Posterior vena cava (tissue), 2 donors: ENCODE measurements at regions of chr12 and their contacts with region 1.

Region 1: DNA sequence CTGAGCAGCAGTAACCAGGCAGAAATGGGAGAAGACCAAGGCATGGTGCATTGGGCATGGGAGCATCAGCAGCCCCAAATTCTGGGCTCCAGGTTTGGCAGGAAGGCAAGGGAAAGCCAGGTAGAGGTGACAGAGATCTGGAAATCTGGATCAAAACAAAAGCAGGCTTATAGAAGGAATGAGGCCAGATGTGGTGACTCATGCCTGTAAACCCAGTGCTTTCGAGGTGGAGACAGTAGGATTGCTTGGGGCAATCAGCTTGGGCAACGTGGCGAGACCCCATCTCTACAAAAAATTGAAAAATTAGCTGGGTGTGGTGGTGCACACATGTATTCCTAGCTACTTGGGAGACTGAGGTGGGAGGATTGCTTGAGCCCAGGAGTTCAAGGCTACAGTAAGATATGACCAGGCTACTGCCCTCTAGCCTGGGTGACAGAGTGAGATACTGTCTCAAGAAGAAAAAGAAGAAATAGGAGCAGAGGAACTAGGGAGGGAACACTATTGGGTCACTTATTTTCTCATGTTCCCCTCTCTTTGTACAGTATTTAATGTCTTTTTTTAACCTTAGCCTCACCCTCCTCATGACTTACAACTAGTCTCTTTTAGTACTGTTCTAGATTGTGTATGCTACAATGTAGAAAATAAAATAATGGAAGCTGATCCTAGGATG is 25.1 kb downstream of the SLC4A8 start:
- DNase-seq: no peak

Region 2: DNA sequence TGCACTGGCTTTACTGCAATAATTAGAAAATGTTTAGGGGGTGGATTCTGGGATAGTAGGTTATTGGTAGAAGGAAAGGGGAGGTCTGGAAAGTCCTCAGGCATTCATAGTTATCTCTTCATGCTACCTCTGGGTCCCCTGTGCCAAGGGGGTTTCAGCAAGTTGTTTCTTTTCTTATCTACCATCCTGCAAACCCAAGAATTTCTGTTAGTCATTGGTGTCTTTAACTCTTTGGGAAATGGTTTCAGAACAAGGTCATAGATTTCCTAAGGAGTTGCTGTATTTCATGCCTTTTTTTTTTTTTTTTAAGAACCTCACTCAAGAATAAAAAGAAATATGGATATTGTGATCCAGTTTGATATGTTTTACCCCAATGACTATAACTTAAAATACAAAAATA is 38.6 kb after region 1 on chr12:
- intact Hi-C with region 1: loop called in 1 of 2 experiments (anchors 2 kb)
- DNase-seq: no peak